ENCODE measurements at regions of chr2 and their contacts with region 1.

Region 1: GRCh38 chr2:210476194-210477128 is at the start of gene LANCL1:
- DNase-seq: peak; percentile 91
- ATAC-seq: peak; percentile 100
- H3K4me3 ChIP-seq: peak within 1 kb of the TSS; percentile 67 to 87 (median 82)
- H3K27ac ChIP-seq: peak within 1 kb of the TSS; percentile 77
- H3K4me1 ChIP-seq: peaks cover 18% of the 10 kb centered on the region
- H3K27me3 ChIP-seq: no peaks in the 10 kb centered on the region; a peak in 1 of 5 replicates
- CTCF ChIP-seq: peak; percentile 51
- EP300 ChIP-seq: peak in 1 of 2 experiments; percentile 32; a peak in 1 of 4 replicates
- POLR2A ChIP-seq: peak; percentile 94 to 98
- RAD21 ChIP-seq: peak; percentile 41; the same call in 1 of the 2 replicates
- total RNA-seq, gene LANCL1: 67.7 and 111 TPM in 2 replicates

Region 2: DNA sequence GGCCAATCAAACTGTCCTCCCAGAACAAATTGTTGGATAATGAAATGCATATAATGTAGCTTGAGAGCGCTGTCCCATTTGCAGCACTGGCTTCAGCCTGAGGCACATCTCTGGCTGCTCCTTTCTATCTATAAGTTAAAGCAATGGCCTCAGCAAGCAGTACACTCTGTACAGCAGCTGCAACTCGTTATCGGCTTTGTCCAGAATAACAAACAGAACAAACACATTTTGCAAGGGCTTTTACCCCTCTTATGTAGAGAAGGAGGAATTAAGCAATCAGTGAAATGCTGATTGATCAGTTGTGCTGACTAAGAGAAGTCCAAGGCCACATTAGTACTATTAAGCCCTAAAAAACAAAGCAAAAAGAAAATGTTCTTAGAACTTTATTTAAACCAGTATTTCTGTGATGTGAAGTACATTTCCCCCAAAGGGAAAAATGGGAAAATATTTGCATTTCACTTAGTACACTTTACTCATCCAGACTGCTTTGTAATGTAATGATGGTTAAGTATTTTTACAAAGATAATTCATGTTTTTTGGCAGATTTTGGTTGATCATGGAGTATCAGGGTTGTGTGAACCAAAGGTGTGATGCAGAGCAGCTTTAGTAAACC is 64.9 kb after region 1 on chr2:
- CTCF ChIA-PET with region 1: no interaction called
- POLR2A ChIA-PET with region 1: no interaction called
- in situ Hi-C with region 1: no loop called
- intact Hi-C with region 1: loop called (anchors 5 kb)
- DNase-seq: peak; percentile 95
- ATAC-seq: peak; percentile 97
- H3K4me3 ChIP-seq: peak overlapping the region in 2 of 3 experiments; percentile 32; a peak in 2 of 6 replicates
- H3K27ac ChIP-seq: peak overlapping the region; percentile 80
- H3K4me1 ChIP-seq: peaks cover 63% of the 10 kb centered on the region
- H3K27me3 ChIP-seq: no peaks in the 10 kb centered on the region
- CTCF ChIP-seq: 0 out of 2 replicates have a peak, but pooled peaks have one; percentile 9
- EP300 ChIP-seq: peak; percentile 60 to 98; a peak in 3 of 4 replicates
- POLR2A ChIP-seq: peak in 1 of 2 experiments; percentile 40; a peak in 1 of 4 replicates
- RAD21 ChIP-seq: no peak